Spleen (tissue), 13 donors: ENCODE measurements at regions of chr1 and their contacts with region 1.

Region 1: DNA sequence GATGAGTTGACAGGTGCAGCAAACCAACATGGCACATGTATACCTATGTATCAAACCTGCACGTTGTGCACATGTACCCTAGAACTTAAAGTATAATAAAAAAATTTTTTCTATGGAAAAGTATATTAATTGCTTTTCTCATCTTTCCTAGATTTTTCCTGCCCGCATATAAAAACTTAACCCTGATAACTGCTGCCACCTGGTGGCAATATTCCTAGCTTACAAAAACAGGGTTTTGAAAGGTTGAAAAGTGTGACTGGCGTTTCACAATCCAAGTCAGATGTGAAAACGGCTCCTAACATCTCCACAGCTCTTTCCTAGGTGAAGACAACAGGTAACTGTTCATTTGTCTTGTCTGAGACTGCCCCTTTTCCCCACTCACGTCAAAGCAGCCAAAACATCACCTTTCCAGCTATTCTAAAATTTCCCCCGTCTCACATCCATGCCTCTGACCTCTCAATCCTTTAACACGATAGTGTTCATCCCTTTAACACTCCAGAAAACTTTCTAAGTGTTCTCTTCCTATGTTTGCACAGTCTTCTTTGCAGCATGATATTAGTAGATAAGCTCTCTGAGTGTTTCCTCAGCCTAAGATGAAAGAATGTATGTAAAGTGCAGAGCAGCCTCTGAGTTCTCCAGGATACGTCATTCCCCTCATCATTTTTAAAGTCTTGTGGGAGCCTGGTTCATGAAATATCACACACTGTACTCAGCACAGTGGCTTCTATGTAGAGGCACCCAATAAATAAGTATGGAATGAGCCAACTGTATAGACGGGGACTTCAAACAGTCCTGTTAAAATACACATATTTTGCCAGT is 27.5 kb downstream of the OVGP1 start:
- DNase-seq: no peak
- H3K4me3 ChIP-seq: no peak overlapping the region
- H3K27ac ChIP-seq: no peak overlapping the region
- H3K4me1 ChIP-seq: peaks cover 0 to 17% (median 4%) of the 10 kb centered on the region in 6 donors
- H3K27me3 ChIP-seq: no peaks in the 10 kb centered on the region
- CTCF ChIP-seq: peak; percentile 44 to 80 (median 75)
- POLR2A ChIP-seq: no peak

Region 2: GRCh38 chr1:110594456-110595352 is 805.3 kb before region 1 on chr1:
- intact Hi-C with region 1: no loop called
- DNase-seq: no peak
- H3K4me3 ChIP-seq: no peak overlapping the region
- H3K27ac ChIP-seq: no peak overlapping the region
- H3K4me1 ChIP-seq: no peaks in the 10 kb centered on the region
- H3K27me3 ChIP-seq: peaks cover 0 to 19% (median 0%) of the 10 kb centered on the region in 7 donors
- CTCF ChIP-seq: no peak
- POLR2A ChIP-seq: no peak

Region 3: GRCh38 chr1:111190651-111191451 is 209.2 kb before region 1 on chr1:
- intact Hi-C with region 1: no loop called
- DNase-seq: no peak
- H3K4me3 ChIP-seq: no peak overlapping the region
- H3K27ac ChIP-seq: peak overlapping the region in 7 of 8 donors; percentile 73 to 100 (median 97)
- H3K4me1 ChIP-seq: peaks cover 41 to 100% (median 79%) of the 10 kb centered on the region in 6 donors
- H3K27me3 ChIP-seq: no peaks in the 10 kb centered on the region
- CTCF ChIP-seq: no peak
- POLR2A ChIP-seq: no peak

Region 4: DNA sequence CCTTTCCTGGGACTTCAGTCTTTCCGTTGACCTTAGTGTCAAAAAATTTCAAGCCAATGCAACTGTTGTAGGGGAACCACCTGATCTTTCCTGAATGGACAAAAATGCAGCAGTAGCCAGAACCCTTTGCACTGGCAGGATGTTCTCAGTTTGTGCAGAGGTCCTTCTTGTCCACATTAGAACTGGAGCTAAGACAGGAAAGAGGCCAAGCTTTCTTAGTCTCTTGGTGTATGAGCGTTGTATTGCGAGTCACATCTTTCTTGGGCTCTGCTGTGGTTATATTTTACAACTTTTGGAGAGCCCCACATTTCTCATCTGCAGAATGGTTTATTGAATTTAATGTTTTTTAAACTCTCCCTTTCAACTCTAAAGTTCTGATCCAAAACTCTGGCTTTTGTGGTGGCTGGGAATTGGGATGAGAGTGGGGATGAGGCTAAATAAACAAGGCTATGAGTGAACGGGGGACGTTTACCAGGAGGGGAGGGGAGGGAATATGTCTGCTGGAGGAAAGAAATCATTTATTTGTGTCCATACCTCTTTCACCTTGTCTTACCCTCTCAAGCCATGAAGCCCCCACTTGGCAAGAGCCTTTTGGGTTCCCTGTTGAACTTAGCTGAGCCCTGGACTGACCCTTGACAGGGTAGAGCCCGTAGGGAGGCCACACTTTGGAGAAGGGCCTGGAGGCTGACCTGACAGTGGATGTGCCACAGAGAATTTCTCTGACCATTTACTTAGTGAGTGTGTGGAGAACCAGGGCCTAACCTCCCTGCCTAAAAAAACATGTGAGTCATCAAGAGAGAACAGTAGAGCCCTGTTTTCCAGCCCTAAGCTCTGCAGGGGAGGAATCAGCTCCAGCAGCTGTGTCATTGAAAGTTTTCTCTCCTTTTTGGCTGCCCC is 171.9 kb before region 1 on chr1:
- intact Hi-C with region 1: loop called (anchors 5 kb)
- DNase-seq: no peak
- H3K4me3 ChIP-seq: no peak overlapping the region
- H3K27ac ChIP-seq: peak overlapping the region in 5 of 8 donors; percentile 61 to 81 (median 66)
- H3K4me1 ChIP-seq: peaks cover 9 to 93% (median 39%) of the 10 kb centered on the region in 6 donors
- H3K27me3 ChIP-seq: no peaks in the 10 kb centered on the region
- CTCF ChIP-seq: no peak
- POLR2A ChIP-seq: no peak